IMR-90 (cell line): ENCODE measurements at regions of chr9 and their contacts with region 1.

Region 1: DNA sequence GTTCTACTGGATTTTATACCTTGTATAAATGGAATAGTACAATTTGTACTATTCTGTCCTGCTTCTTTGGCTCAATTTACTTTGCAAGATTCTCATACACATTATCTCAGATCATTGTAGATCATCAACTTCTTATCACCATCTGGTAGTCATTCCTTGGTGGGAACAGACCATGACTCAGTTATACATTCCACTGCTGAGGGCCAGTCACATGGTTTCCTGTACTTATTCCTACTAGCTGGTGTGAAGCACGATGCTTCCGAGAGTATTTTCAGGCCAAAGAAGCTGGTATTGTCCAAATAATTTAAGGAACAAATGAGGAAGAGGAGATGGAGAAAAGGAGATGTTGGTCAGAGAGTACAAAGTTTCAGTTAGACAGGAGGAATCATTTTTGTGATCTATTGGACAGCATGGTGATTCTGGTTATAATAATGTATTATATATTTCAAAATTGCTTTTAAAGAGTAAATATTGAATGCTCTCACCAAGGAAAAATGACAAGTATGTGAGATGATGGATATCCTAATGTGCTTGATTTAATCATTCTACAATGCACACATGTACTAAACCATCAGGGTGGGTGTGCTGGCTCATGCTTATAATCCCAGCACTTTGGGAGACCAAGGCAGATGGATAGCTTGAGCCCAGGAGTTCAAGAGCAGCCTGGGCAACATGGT is 124.1 kb downstream of the SYK start:
- DNase-seq: peak; percentile 95
- ATAC-seq: peak; percentile 87
- H3K4me3 ChIP-seq: no peak overlapping the region
- H3K27ac ChIP-seq: peak overlapping the region; percentile 39; the same call in 1 of the 2 replicates
- H3K4me1 ChIP-seq: peaks cover 7% of the 10 kb centered on the region
- H3K27me3 ChIP-seq: no peaks in the 10 kb centered on the region
- CTCF ChIP-seq: no peak
- POLR2A ChIP-seq: no peak
- RAD21 ChIP-seq: no peak

Region 2: DNA sequence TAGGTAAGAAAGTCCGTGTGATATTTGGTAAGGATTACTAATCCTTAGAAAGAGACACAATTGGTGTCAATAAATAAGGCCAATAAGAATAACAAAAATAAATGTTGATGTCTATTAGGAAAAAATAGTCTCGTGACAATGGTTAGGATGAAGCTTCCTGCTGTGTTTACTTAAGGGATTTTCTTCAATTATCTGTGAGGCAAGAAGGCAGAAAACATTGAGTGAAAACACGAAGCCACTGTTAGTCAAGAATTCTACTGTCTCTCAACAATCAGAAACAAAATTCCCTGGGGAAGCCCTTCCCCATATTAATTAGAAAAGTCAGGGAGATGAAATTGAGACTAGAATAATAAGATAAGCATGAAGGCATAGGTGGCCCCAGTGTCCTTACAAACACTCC is 24.9 kb after region 1 on chr9:
- CTCF ChIA-PET with region 1: no interaction called
- POLR2A ChIA-PET with region 1: no interaction called
- dilution Hi-C with region 1: no loop called
- in situ Hi-C with region 1: no loop called
- intact Hi-C with region 1: loop called (anchors 2 kb)
- DNase-seq: no peak
- ATAC-seq: peak; percentile 53; the same call in 1 of the 2 replicates
- H3K4me3 ChIP-seq: no peak overlapping the region
- H3K27ac ChIP-seq: no peak overlapping the region
- H3K4me1 ChIP-seq: peaks cover 1% of the 10 kb centered on the region; the same call in 1 of the 2 replicates
- H3K27me3 ChIP-seq: peaks cover 2% of the 10 kb centered on the region; the same call in 1 of the 2 replicates
- CTCF ChIP-seq: no peak
- POLR2A ChIP-seq: no peak
- RAD21 ChIP-seq: no peak

Region 3: DNA sequence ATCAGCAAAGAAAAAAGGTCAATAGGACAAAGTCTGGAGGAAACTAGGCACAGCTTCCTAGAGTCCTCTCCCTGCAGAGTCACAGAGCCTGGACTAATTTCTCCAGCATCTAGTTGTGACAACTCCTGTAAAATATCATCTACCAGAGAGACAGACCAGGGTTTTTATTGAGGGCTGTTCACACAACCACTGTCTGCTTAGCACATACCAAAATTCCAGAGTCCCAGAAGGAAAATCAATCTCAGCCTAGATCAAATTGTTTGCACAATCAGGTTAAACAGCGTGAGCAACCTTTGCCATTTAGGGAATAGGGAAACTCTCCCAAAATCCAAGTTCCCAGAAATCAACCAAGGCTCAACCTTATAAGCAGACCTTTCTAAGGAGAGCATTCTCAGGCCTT is 66.2 kb after region 1 on chr9:
- CTCF ChIA-PET with region 1: no interaction called
- POLR2A ChIA-PET with region 1: no interaction called
- dilution Hi-C with region 1: no loop called
- in situ Hi-C with region 1: no loop called
- intact Hi-C with region 1: loop called (anchors 5 kb)
- DNase-seq: no peak
- ATAC-seq: peak; percentile 58
- H3K4me3 ChIP-seq: no peak overlapping the region
- H3K27ac ChIP-seq: peak overlapping the region; percentile 27
- H3K4me1 ChIP-seq: peaks cover 13% of the 10 kb centered on the region
- H3K27me3 ChIP-seq: no peaks in the 10 kb centered on the region
- CTCF ChIP-seq: no peak
- POLR2A ChIP-seq: no peak
- RAD21 ChIP-seq: no peak